ENCODE measurements at regions of chr6 and their contacts with region 1.

Region 1: GRCh38 chr6:32971581-32972352 is 3.4 kb downstream of the BRD2 start:
- DNase-seq: peak; percentile 99
- ATAC-seq: peak; percentile 56 to 72 (median 69)
- H3K4me3 ChIP-seq: peak overlapping the region; percentile 63 to 100 (median 90)
- H3K27ac ChIP-seq: peak overlapping the region; percentile 97 to 100 (median 100)
- H3K4me1 ChIP-seq: peaks cover 0 to 40% (median 33%) of the 10 kb centered on the region in 12 donors
- H3K27me3 ChIP-seq: no peaks in the 10 kb centered on the region
- CTCF ChIP-seq: peak in 2 of 12 donors; percentile 6 to 14
- POLR2A ChIP-seq: peak; percentile 94 to 99

Region 2: GRCh38 chr6:32195652-32195901 is 776.2 kb before region 1 on chr6:
- intact Hi-C with region 1: loop called in 1 of 10 experiments (anchors 10 kb)
- DNase-seq: peak; percentile 100
- ATAC-seq: peak in 3 of 4 donors; percentile 85 to 93 (median 86)
- H3K4me3 ChIP-seq: peak overlapping the region in 10 of 12 donors; percentile 65 to 93 (median 76)
- H3K27ac ChIP-seq: peak overlapping the region; percentile 92 to 100 (median 100)
- H3K4me1 ChIP-seq: peaks cover 7 to 61% (median 39%) of the 10 kb centered on the region in 12 donors
- H3K27me3 ChIP-seq: no peaks in the 10 kb centered on the region
- CTCF ChIP-seq: peak; percentile 48 to 73 (median 56)
- POLR2A ChIP-seq: no peak

Region 3: GRCh38 chr6:32843979-32844838 is 127.6 kb before region 1 on chr6 and contains the start of gene PSMB8:
- intact Hi-C with region 1: loop called in 2 of 10 experiments (anchors 5 kb)
- DNase-seq: peak; percentile 95 to 97 (median 96)
- ATAC-seq: peak; percentile 94 to 97 (median 96)
- H3K4me3 ChIP-seq: peak within 1 kb of the TSS; percentile 61 to 93 (median 81)
- H3K27ac ChIP-seq: peak within 1 kb of the TSS; percentile 80 to 100 (median 96)
- H3K4me1 ChIP-seq: peaks cover 0 to 85% (median 16%) of the 10 kb centered on the region in 12 donors
- H3K27me3 ChIP-seq: no peaks in the 10 kb centered on the region
- CTCF ChIP-seq: peak in 7 of 12 donors; percentile 17 to 57 (median 35)
- POLR2A ChIP-seq: peak in 1 of 2 donors; percentile 85
- total RNA-seq, gene PSMB8: 11.1 to 115 (median 15.2) TPM

Region 4: GRCh38 chr6:32933636-32934085 is 38.1 kb before region 1 on chr6:
- intact Hi-C with region 1: loop called in 1 of 10 experiments (anchors 5 kb)
- DNase-seq: peak; percentile 74 to 85 (median 77)
- ATAC-seq: peak in 3 of 4 donors; percentile 57 to 73 (median 71)
- H3K4me3 ChIP-seq: no peak overlapping the region
- H3K27ac ChIP-seq: peak overlapping the region in 1 of 12 donors; percentile 43
- H3K4me1 ChIP-seq: peaks cover 0 to 66% (median 0%) of the 10 kb centered on the region in 12 donors
- H3K27me3 ChIP-seq: no peaks in the 10 kb centered on the region
- CTCF ChIP-seq: peak; percentile 67 to 90 (median 81)
- POLR2A ChIP-seq: no peak

Region 5: DNA sequence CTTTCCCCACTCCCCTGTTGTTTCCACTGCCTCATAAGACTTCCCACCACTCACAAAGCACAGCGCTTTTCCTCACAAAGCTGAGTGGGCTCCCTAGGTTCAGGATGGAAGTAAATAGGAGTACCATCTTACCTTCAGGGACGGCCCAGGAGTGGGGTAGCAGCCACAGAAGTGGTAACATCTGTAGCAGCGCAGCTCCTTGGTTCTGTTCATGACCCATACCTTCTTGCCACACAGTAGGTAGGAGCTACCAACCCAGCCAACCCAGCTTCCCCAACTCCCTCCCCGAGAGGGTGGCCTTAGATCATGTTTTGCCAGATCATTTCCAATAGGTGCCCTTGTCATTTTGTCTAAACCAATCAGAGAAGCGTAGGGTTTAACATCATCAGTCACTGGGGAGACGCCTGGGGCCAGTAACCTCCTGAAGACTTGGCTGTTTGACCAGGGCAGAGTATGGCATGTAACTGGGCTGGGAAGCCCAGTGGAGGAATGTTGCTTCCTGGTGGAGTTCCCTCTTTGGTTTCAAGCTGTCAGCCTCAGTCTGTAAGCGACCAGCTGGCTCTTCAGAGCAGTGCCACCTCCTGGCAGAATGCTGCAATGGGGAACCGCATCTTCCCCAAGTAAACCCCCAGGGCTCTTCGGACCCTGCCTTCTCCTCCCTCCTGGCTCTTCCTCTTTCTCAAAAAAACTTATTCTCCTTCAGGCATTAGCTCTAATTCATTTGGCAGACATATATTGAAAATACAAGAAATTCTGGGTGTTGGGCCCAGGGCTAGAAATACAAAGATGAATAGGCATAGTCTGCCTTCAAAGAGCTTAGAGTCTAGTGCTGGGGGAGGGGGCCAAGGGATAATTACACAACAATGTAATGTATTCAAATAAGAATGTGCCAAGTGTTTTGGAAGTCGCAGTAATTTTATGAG is 18.7 kb before region 1 on chr6 and contains the start of gene HLA-DMA:
- intact Hi-C with region 1: loop called in 3 of 10 experiments (anchors 1 to 2 kb)
- DNase-seq: peak; percentile 82 to 89 (median 87)
- ATAC-seq: peak; percentile 99 to 100 (median 100)
- H3K4me3 ChIP-seq: peak within 1 kb of the TSS; percentile 11 to 63 (median 43)
- H3K27ac ChIP-seq: peak within 1 kb of the TSS; percentile 34 to 94 (median 78)
- H3K4me1 ChIP-seq: peaks cover 0 to 71% (median 5%) of the 10 kb centered on the region in 12 donors
- H3K27me3 ChIP-seq: no peaks in the 10 kb centered on the region
- CTCF ChIP-seq: peak; percentile 65 to 93 (median 81)
- POLR2A ChIP-seq: peak in 1 of 2 donors; percentile 73
- total RNA-seq, gene HLA-DMA: 5.4 to 150 (median 16.2) TPM

Region 6: GRCh38 chr6:33000055-33000454 is 28.3 kb after region 1 on chr6:
- intact Hi-C with region 1: no loop called
- DNase-seq: no peak
- ATAC-seq: no peak
- H3K4me3 ChIP-seq: no peak overlapping the region
- H3K27ac ChIP-seq: no peak overlapping the region
- H3K4me1 ChIP-seq: peaks cover 0 to 12% (median 0%) of the 10 kb centered on the region in 12 donors
- H3K27me3 ChIP-seq: peaks cover 0 to 30% (median 0%) of the 10 kb centered on the region in 9 donors
- CTCF ChIP-seq: peak in 6 of 12 donors; percentile 19 to 40 (median 28)
- POLR2A ChIP-seq: no peak

Region 7: DNA sequence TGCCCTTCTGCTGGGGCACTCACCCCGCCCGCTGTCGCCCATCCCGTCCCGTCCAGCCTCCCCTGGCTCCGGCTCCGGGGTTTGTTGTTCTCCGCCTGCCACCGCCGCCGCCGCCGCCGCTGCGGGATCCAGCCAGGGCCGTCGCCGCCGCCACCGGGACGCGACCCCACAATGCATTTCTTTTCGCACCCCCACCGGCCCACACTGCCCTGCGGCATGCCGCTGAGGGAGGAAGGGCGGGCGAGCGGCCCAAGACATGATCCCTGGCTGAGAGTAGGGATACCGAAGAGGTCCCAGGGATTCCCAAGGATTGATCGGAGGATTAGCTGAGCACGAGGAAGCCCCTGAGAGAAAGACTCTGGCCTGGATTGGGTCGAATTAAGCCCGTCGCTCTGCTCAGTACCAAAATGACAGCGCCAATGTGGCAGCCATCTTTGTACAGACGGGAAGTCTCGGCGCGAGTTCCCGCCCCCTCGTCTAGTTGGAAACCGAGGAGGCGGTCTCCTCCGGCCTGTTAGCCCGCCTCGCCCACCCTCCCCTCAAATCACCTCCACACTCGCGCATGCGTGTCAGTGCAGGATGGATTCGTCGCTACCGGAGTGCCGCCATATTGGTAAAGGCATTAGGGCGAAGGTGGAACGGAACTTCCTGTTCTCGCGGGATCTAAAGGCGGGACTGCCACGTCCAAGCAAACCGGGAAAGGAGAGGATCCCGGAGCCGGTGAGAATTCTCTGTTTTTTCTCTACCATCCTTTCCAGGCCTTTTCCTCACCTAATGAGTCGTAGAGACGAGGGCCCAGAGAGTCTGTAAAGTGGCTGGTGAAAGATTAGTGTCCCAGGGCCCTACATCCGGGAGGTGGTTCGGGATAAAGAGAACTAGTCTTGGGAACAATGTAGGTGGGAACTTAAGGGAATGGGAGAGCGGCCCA is 228.7 kb after region 1 on chr6 and contains the starts of genes RXRB and SLC39A7:
- intact Hi-C with region 1: loop called in 1 of 10 experiments (anchors 1 kb)
- DNase-seq: peak; percentile 99 to 100 (median 99)
- ATAC-seq: peak; percentile 86 to 92 (median 88)
- H3K4me3 ChIP-seq: peak within 1 kb of the TSS; percentile 59 to 98 (median 80)
- H3K27ac ChIP-seq: peak within 1 kb of the TSS; percentile 88 to 100 (median 98)
- H3K4me1 ChIP-seq: peaks cover 10 to 76% (median 54%) of the 10 kb centered on the region in 12 donors
- H3K27me3 ChIP-seq: no peaks in the 10 kb centered on the region
- CTCF ChIP-seq: no peak
- POLR2A ChIP-seq: peak in 1 of 2 donors; percentile 49
- total RNA-seq, gene RXRB: 20.7 to 39.6 (median 33.4) TPM
- total RNA-seq, gene SLC39A7: 42.4 to 70.4 (median 55.3) TPM

Measured in heart left ventricle (tissue), 16 donors.